AG04449 (cell line): ENCODE measurements at regions of chr17 and their contacts with region 1.

Region 1: DNA sequence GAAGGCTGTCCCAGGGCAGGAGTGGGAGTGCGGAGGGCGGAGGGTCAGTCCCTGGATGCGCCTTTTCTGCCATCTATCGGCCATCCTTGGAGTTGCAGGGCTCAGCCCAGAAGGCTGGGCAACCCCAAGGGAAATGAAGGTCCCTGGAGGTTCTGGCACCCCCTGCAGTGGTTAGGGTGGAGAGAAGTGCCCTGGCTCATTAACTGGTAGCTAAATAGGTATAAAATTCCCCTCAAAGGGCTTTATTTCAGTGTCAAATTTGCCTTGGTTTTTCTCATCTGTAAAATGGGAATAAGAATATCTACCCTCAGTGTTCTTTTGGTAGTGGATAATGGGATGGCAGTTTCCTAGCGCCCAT is 22.4 kb downstream of the C17orf75 start:
- DNase-seq: no peak
- H3K4me3 ChIP-seq: no peak overlapping the region
- CTCF ChIP-seq: peak; percentile 97

Region 2: DNA sequence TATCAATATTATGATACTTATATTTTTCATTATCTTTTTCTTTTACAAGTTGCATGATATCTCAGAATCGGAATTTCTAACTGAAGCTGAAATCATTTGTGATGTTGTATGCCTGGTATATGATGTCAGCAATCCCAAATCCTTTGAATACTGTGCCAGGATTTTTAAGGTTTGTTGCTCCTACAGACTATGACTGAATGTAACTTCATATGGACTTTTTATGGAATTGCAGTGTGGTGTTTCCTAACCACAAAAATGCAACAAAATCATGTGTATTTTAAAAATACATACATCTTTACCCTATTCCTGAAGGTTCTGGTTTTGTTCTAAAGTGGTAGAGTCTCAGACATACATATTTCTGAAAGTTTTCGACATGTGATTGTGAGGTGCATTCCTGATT is 112.7 kb before region 1 on chr17:
- CTCF ChIA-PET with region 1: interaction called, 17 read pairs
- POLR2A ChIA-PET with region 1: no interaction called
- DNase-seq: peak; percentile 45
- H3K4me3 ChIP-seq: no peak overlapping the region
- CTCF ChIP-seq: no peak

Region 3: GRCh38 chr17:32253117-32253611 is 66.4 kb before region 1 on chr17:
- CTCF ChIA-PET with region 1: interaction called, 23 read pairs
- POLR2A ChIA-PET with region 1: no interaction called
- DNase-seq: no peak
- H3K4me3 ChIP-seq: no peak overlapping the region
- CTCF ChIP-seq: peak; percentile 98

Region 4: GRCh38 chr17:32307658-32308057 is 11.9 kb before region 1 on chr17:
- CTCF ChIA-PET with region 1: interaction called, 12 read pairs
- POLR2A ChIA-PET with region 1: no interaction called
- DNase-seq: no peak
- H3K4me3 ChIP-seq: no peak overlapping the region
- CTCF ChIP-seq: no peak

Region 5: GRCh38 chr17:32331243-32332040 is 11.9 kb after region 1 on chr17:
- CTCF ChIA-PET with region 1: interaction called, 47 read pairs
- POLR2A ChIA-PET with region 1: interaction called, 3 read pairs
- DNase-seq: no peak
- H3K4me3 ChIP-seq: no peak overlapping the region
- CTCF ChIP-seq: no peak

Region 6: GRCh38 chr17:32355649-32356377 is 36.3 kb after region 1 on chr17:
- CTCF ChIA-PET with region 1: no interaction called
- POLR2A ChIA-PET with region 1: no interaction called
- DNase-seq: no peak
- H3K4me3 ChIP-seq: no peak overlapping the region
- CTCF ChIP-seq: no peak

Region 7: DNA sequence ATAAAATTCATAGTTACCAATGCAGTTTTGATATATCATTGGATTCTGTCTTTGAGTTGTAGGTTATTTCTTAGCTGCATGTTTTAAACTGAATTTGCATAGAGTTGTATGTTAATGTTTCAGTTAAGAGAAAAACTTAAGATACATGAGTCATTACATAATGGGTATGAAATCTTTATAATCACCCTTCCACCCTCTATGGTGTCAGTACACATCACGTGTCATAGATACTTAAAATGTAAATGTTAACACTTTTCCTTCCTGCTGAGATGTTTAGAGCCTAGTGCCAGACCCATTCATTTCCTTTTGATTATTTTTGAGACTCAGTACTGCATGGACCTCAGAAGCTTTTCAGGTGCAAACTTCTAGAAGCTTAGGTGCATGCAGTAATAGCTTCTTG is 50.9 kb after region 1 on chr17:
- CTCF ChIA-PET with region 1: no interaction called
- POLR2A ChIA-PET with region 1: no interaction called
- DNase-seq: no peak
- H3K4me3 ChIP-seq: no peak overlapping the region
- CTCF ChIP-seq: no peak